Astrocyte of the cerebellum (primary cell): ENCODE measurements at regions of chr2 and their contacts with region 1.

Region 1: DNA sequence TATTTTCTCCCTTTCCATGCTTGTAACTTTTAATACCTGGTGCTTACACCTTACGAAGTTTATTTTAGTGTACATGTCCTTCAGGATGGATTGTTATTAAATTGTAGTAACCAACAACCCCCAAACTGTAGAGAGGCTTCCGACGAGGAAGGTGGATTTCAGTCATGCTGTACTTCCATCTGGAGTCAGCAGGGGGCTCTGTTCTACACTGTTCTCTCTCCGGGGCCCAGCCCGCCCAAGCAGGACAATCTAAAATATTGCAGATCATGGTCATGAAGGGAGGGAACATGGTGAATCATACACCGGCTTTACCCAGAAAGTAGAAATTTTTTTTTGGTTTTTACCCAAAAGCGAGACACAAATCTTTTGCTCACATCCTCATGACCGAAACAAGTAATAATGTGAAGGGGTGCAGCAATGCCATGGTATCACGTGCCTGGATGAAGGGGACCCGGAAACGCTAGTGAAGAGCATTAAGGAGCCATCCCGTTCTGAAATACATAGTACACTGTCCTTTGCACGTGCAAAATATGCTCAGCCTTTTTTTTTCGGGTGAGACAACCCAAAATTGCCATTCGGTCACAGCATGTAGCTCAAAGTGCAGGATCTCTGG is 884.8 kb downstream of the EPHA4 start:
- DNase-seq: peak; percentile 41
- H3K4me3 ChIP-seq: no peak overlapping the region
- CTCF ChIP-seq: peak; percentile 84

Region 2: DNA sequence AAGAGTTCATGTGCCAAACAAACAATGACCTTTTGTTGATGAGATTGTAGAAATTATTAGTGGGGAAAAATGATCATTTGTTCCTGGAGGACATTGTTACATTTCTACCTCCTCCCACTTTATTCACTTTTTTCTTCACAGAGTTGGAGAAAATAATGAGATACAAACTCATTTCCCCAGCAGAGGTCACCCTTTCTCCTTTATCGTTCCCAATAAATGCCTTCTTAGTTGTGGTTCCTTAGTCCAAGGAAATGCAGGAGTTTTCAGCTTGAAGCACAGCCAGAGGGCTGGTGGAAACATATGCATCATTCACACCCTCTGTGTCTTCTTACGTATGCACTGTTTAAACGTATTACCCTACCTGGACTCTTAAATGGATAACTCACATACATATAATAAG is 951.1 kb before region 1 on chr2:
- in situ Hi-C with region 1: loop called (anchors 25 kb)
- DNase-seq: peak; percentile 78
- H3K4me3 ChIP-seq: no peak overlapping the region
- CTCF ChIP-seq: peak; percentile 38